ENCODE measurements at regions of chr9 and their contacts with region 1.

Region 1: DNA sequence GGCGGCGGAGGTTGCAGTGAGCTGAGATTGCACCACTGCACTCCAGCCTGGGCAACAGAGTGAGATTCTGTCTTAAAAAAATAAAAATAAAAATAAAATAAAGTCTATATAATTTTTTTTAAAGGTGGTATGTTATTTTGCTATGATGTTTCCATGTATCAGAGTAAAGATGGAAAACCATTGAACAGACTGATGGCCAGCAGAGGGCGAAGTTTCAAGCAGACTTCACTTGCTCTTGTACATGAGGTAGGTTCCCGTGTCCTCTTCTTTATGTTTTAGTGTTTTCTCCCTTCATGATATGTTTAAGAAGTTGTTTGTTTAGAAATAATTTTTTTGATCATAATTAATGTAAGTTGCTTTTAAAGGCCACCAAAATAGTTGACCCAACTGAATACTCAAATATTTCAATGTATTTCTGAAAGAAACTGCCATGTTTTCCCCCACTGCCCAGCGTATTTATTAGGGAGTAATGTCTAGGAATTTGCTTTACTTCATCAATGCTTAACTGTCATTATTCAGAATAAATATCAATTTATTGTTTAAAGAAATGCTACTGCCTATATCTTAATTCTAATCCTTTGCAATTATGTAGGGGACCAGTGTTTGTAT is 146.4 kb downstream of the HACD4 start:
- DNase-seq: peak; percentile 69
- H3K4me3 ChIP-seq: no peak overlapping the region
- H3K27ac ChIP-seq: no peak overlapping the region
- H3K4me1 ChIP-seq: no peaks in the 10 kb centered on the region
- H3K27me3 ChIP-seq: no peaks in the 10 kb centered on the region
- CTCF ChIP-seq: peak in 3 of 4 experiments; percentile 49 to 69 (median 50)
- EP300 ChIP-seq: no peak
- POLR2A ChIP-seq: no peak

Region 2: DNA sequence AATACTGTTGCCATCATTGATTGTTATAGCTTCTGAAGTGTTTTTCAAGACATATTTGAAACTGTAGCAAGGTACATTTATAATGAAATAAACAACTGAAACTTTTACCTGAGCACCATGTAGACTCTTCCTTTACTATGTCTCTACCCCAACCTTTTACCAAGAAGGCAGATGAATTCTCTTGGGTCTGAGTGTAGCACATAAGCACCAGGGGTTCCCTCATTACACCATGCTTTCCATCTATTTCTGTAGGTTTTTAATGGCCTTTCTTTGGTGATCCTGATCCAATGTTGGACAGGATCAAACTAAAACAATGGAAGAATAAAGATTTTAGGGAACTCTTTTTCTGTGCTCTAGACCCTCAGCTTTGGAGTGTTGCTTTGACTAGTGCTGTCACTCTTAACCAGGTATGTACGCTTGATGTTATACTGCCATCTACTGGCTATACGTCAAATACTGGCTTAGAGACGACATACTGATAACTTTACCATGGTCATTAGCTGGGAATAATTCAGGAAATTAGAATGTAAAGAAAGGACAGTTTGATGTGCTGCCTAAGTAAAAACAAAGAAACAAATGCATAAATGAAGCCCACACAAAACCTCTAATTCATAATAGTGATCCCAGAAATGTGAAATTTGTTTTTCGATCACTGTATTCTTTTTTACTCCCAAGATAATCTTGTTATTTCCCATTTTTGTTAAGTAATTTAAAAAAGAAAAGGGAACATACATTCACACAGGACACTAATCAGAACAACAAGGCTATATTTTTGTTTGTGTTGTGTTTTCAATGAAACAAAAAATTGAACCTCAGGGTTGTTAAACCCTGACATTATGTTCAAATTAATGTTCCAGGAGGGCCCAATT is 225.9 kb after region 1 on chr9:
- intact Hi-C with region 1: loop called (anchors 5 kb)
- DNase-seq: no peak
- H3K4me3 ChIP-seq: no peak overlapping the region
- H3K27ac ChIP-seq: no peak overlapping the region
- H3K4me1 ChIP-seq: no peaks in the 10 kb centered on the region
- H3K27me3 ChIP-seq: no peaks in the 10 kb centered on the region
- CTCF ChIP-seq: peak; percentile 43 to 84 (median 68)
- EP300 ChIP-seq: no peak
- POLR2A ChIP-seq: no peak